Vagina (tissue), 2 donors: ENCODE measurements at regions of chr7 and their contacts with region 1.

Region 1: DNA sequence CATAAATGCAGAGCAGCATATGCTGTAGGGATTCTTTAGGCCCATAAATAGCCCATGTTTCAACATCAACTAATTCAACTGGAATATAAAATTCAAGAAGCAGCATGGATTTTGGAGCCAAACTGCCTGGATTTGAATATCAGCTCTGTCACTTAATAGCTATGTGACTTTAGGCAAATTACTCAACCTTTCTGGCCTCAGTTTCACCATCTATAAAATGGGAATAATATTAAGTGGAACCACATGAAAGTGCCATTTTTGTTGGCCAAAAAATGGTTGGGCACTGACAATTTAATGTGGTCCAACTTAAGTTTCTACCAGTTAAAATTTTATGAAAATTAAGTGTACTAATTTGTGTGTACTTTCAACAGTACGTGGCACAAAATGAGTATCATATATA is 98.1 kb downstream of the GSAP start:
- DNase-seq: no peak
- H3K4me3 ChIP-seq: no peak overlapping the region
- H3K27ac ChIP-seq: no peak overlapping the region
- H3K4me1 ChIP-seq: no peaks in the 10 kb centered on the region
- H3K27me3 ChIP-seq: no peaks in the 10 kb centered on the region
- CTCF ChIP-seq: no peak
- POLR2A ChIP-seq: no peak

Region 2: GRCh38 chr7:77338883-77339629 is 21.0 kb after region 1 on chr7:
- intact Hi-C with region 1: loop called (anchors 1 kb)
- DNase-seq: no peak
- H3K4me3 ChIP-seq: no peak overlapping the region
- H3K27ac ChIP-seq: no peak overlapping the region
- H3K4me1 ChIP-seq: peaks cover 9% of the 10 kb centered on the region
- H3K27me3 ChIP-seq: no peaks in the 10 kb centered on the region
- CTCF ChIP-seq: no peak
- POLR2A ChIP-seq: no peak

Region 3: GRCh38 chr7:77822269-77822668 is 504.2 kb after region 1 on chr7:
- intact Hi-C with region 1: no loop called
- DNase-seq: no peak
- H3K4me3 ChIP-seq: no peak overlapping the region
- H3K27ac ChIP-seq: no peak overlapping the region
- H3K4me1 ChIP-seq: peaks cover 1% of the 10 kb centered on the region
- H3K27me3 ChIP-seq: no peaks in the 10 kb centered on the region
- CTCF ChIP-seq: no peak
- POLR2A ChIP-seq: no peak

Region 4: GRCh38 chr7:78006063-78006755 is 688.2 kb after region 1 on chr7:
- intact Hi-C with region 1: no loop called
- DNase-seq: no peak
- H3K4me3 ChIP-seq: no peak overlapping the region
- H3K27ac ChIP-seq: no peak overlapping the region
- H3K4me1 ChIP-seq: no peaks in the 10 kb centered on the region
- H3K27me3 ChIP-seq: no peaks in the 10 kb centered on the region
- CTCF ChIP-seq: no peak
- POLR2A ChIP-seq: no peak